Posterior cingulate gyrus (tissue), 11 donors: ENCODE measurements at regions of chr11 and their contacts with region 1.

Region 1: GRCh38 chr11:3091791-3092602 is 34.8 kb upstream of the CARS1 start:
- DNase-seq: peak in 8 of 10 donors; percentile 45 to 96 (median 72)

Region 2: DNA sequence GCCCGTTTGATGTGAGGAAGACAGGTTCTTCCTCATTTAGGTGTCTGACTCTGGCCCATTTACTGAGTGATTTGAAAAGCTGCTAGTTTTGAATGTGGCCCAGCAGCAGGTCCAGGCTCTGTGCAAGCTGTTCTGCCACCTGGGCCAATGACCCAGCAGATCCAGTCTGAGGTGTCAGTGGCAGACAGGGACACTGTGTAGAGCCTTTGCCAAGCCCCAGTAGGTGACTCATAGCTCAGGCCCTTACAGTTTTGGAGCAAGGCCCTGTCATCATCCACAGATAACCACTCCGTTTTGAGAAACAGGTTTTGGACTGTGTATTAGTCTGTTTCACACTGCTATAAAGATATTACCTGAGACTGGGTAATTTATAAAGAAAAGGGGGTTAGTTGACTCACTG is 766.3 kb before region 1 on chr11:
- intact Hi-C with region 1: no loop called
- DNase-seq: peak in 1 of 10 donors; percentile 50

Region 3: GRCh38 chr11:2483426-2483825 is 608.6 kb before region 1 on chr11:
- intact Hi-C with region 1: no loop called
- DNase-seq: no peak

Region 4: GRCh38 chr11:2975594-2975993 is 116.4 kb before region 1 on chr11:
- intact Hi-C with region 1: loop called (anchors 10 kb)
- DNase-seq: peak in 6 of 10 donors; percentile 28 to 86 (median 52)

Region 5: GRCh38 chr11:3037040-3037944 is 54.7 kb before region 1 on chr11:
- intact Hi-C with region 1: loop called (anchors 1 kb)
- DNase-seq: peak; percentile 70 to 97 (median 90)

Region 6: GRCh38 chr11:3049430-3050243 is 42.4 kb before region 1 on chr11:
- intact Hi-C with region 1: loop called (anchors 5 kb)
- DNase-seq: peak; percentile 83 to 99 (median 90)

Region 7: GRCh38 chr11:3225826-3226631 is 134.0 kb after region 1 on chr11:
- intact Hi-C with region 1: no loop called
- DNase-seq: peak in 3 of 10 donors; percentile 52 to 76 (median 59)

Region 8: DNA sequence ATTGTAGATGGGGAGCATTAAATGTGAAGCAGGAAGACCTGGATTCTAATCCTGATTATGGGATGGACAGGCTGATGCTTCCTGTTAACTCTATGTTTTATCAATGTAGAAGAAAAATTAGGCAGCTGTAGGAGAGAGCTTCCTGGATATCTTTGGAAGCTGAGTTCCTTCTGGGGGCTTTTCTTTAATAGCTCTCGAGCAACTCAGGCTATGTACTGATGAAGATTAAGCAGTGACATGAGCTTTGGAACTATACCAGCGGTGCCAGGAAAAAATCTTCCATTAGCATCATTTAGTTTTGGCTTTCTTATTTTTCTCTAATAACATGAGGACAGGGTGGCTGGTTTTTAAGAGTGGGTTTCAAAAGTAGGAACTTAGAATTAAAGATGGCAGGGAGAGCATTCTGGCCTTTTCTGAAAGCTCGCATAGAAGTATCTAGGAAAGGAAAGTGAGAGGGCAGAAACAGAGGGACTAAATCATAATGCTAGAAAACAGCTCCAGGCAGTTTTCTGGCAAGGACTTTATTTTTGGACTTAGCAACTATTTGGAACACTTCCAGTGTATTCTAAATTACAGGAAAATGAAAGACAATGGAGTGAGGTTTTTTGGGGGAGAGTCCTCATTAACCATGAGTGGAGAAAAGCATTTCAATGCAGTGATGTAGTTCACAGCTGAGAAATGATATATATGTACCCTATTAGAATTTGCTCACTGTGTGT is 933.4 kb after region 1 on chr11:
- intact Hi-C with region 1: no loop called
- DNase-seq: no peak